GM10248 (cell line): ENCODE measurements at regions of chr19 and their contacts with region 1.

Region 1: GRCh38 chr19:50556282-50557008 is 11.8 kb downstream of the LRRC4B start:
- DNase-seq: peak; percentile 91
- CTCF ChIP-seq: peak; percentile 91

Region 2: GRCh38 chr19:50357178-50358100 is 199.0 kb before region 1 on chr19:
- CTCF ChIA-PET with region 1: interaction called, 29 read pairs
- POLR2A ChIA-PET with region 1: no interaction called
- DNase-seq: peak; percentile 70
- CTCF ChIP-seq: peak; percentile 70

Region 3: GRCh38 chr19:50461066-50461875 is 95.2 kb before region 1 on chr19:
- CTCF ChIA-PET with region 1: interaction called, 10 read pairs
- POLR2A ChIA-PET with region 1: no interaction called
- DNase-seq: peak; percentile 88
- CTCF ChIP-seq: peak; percentile 81

Region 4: DNA sequence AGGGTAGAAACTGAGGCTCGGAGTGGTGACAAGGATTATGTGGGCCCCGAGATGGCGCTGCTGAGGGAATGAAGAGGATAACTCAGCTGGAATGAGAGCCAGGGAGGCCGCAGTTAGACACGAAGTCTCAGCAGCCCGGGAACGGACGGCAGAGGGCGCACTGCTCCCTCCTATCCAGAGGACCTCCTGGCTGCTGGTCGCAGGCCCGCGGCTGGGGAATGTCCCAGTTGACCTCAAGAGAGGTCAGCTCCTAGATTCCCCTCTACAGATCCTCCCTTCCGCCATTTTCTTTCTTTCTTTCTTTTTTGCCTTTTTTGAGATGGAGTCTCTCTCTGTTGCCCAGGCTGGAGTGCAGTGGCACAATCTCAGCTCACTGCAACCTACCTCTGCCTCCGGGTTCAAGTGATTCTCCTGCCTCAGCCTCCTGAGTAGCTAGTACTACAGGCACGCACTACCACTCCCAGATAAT is 18.6 kb before region 1 on chr19:
- CTCF ChIA-PET with region 1: interaction called, 154 read pairs
- POLR2A ChIA-PET with region 1: interaction called, 3 read pairs
- DNase-seq: peak; percentile 84
- CTCF ChIP-seq: peak; percentile 82

Region 5: DNA sequence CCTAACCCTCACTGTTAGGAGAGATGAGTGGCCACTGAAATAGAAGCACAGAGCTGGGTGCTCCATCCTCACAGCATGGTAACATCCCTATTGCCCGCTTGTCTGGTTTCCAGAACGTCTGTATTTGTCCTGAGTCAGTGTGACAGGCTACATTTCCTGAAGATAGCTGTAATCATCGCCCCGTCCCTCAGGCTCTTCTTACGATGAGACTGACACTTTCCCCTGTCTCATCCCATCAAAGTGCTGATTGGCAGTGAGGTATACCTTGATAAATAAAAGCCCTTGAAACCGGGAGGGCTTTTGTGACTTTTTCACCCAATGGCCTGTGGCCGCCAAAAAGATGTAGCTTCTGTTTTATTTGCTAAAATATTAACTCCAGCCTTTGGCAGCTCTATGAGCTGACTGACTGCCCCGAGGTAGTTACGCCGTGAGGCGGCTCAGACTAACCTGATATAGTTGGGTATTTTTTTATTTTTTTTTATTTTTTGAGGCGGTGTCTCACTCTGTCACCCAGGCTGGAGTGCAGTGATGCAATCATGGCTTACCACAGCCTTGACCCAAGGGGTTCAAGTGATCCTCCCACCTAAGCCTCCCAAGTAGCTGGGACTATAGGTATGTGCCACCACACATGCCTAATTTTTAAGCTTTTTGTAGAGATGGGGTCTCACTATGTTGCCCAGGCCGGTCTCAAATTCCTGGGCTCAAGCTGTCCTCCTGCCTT is 17.5 kb after region 1 on chr19:
- CTCF ChIA-PET with region 1: interaction called, 32 read pairs
- POLR2A ChIA-PET with region 1: no interaction called
- DNase-seq: no peak
- CTCF ChIP-seq: no peak

Region 6: GRCh38 chr19:50676625-50677197 is 120.3 kb after region 1 on chr19:
- CTCF ChIA-PET with region 1: no interaction called
- POLR2A ChIA-PET with region 1: no interaction called
- DNase-seq: no peak
- CTCF ChIP-seq: no peak